Activated CD8-positive, alpha-beta memory T cell treated with anti-CD3 and anti-CD28 coated beads, Interleukin-2, amount 10 ng/mL, durations not matched to agents 7 days and 5 days (primary cell): ENCODE measurements at regions of chr3 and their contacts with region 1.

Region 1: GRCh38 chr3:141011232-141011996 is 39.7 kb upstream of the SPSB4 start:
- DNase-seq: peak; percentile 88
- ATAC-seq: peak; percentile 91
- H3K4me3 Mint-ChIP-seq: no peak overlapping the region
- H3K27ac Mint-ChIP-seq: no peak overlapping the region
- H3K4me1 Mint-ChIP-seq: peaks cover 11% of the 10 kb centered on the region
- H3K27me3 Mint-ChIP-seq: peaks cover 63% of the 10 kb centered on the region

Region 2: DNA sequence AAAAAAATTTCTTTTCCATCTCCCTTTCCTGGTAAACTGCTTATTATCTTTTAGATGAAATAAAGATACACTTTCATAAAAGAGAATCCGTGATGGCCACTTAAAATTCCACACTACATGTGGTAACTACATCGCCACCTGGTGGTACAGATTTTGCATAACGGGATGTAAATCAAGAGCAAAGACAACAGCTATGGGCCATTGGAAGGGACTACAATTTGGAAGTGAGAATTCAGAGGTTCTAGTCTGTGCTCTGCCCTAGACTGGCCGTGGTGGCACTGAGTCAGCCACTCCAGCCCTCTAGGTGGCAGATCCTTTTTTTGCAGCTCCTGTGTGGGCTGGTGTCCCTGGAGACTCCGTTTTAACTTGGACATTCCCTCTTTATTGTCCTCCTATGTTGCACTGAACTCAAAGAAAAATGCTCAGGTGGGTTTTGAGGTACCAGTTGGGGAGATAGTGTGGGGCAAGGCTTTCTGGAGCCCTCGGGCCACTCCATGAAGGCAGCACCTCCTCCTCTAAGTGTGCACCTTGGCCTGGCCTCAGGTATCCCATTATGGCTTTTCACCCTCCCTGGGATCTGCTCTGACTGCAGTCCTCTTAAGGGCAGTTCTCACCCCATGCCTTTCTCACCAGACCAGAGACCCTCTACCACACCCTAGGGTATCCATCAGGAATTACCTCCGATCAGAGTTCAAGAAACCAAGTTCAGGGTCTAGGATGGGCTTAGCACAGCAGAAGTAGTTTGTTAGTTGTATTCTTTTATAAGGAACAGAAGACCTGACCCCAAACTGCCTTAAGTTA is 94.6 kb after region 1 on chr3:
- CTCF ChIA-PET with region 1: interaction called, 22 read pairs
- DNase-seq: peak; percentile 77
- ATAC-seq: peak; percentile 53
- H3K4me3 Mint-ChIP-seq: no peak overlapping the region
- H3K27ac Mint-ChIP-seq: no peak overlapping the region
- H3K4me1 Mint-ChIP-seq: no peaks in the 10 kb centered on the region
- H3K27me3 Mint-ChIP-seq: peaks cover 10% of the 10 kb centered on the region

Region 3: GRCh38 chr3:141192345-141192744 is 180.9 kb after region 1 on chr3:
- CTCF ChIA-PET with region 1: interaction called, 48 read pairs
- DNase-seq: peak; percentile 97
- ATAC-seq: peak; percentile 100
- H3K4me3 Mint-ChIP-seq: no peak overlapping the region
- H3K27ac Mint-ChIP-seq: no peak overlapping the region
- H3K4me1 Mint-ChIP-seq: peaks cover 10% of the 10 kb centered on the region
- H3K27me3 Mint-ChIP-seq: peaks cover 26% of the 10 kb centered on the region